Activated CD4-positive, alpha-beta T cell treated with anti-CD3 and anti-CD28 coated beads for 36 hours (primary cell): ENCODE measurements at regions of chr2 and their contacts with region 1.

Region 1: GRCh38 chr2:55050133-55050994 is at the start of gene RTN4:
- DNase-seq: peak; percentile 99
- ATAC-seq: peak; percentile 92
- H3K4me3 Mint-ChIP-seq: peak within 1 kb of the TSS; percentile 99
- H3K27ac Mint-ChIP-seq: peak within 1 kb of the TSS; percentile 100
- H3K4me1 Mint-ChIP-seq: peaks cover 60% of the 10 kb centered on the region
- H3K27me3 Mint-ChIP-seq: no peaks in the 10 kb centered on the region
- total RNA-seq, gene RTN4: 70.3 to 84.8 TPM

Region 2: DNA sequence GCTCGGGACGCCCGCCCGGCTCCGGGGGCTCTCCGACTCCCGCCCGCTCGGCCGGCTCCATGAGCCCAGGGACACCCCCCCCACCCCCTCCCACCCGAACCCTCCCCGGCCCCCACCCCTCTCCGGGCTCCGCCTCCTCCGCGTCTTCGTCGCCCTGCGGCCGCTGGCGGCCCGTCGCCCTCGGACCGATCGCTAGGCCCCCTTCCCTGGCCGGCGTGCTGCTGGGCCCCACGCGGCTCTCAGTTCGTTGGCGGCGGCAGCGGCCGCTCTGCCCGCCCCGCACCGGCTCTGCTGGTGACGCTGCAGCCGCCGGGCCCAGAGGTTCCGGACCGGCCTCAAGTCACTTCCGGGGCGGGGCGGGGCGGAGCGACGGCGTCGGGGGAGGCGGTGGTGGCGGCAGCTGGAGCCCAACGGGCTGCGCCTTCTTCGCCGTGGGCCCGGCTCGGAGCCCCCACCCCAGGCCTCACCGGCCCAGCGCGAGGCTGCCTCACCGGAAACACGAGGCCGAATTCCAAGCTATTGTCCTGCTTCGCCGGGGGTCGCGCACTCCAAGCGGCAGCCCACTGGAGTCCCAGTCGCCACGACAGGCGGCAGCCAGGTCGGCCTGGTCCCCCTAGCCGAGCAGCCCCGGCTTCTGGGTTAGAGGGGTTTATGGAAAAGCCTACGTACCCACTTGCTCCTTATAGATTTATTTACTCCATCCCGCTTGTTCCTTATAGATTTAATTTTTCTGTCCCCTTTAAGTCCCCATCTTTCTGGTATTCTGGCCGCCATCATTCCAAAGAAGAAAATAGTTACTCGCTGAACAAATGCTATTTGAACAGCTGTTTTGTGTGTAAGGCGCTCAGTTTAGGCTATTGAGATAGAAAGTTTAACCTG is 1079.4 kb before region 1 on chr2 and contains the start of gene PSME4:
- CTCF ChIA-PET with region 1: no interaction called
- POLR2A ChIA-PET with region 1: no interaction called
- intact Hi-C with region 1: loop called in 1 of 2 experiments (anchors 5 kb)
- DNase-seq: peak; percentile 96
- ATAC-seq: peak; percentile 86
- H3K4me3 Mint-ChIP-seq: peak within 1 kb of the TSS; percentile 84
- H3K27ac Mint-ChIP-seq: peak within 1 kb of the TSS; percentile 97
- H3K4me1 Mint-ChIP-seq: peaks cover 35% of the 10 kb centered on the region
- H3K27me3 Mint-ChIP-seq: no peaks in the 10 kb centered on the region
- total RNA-seq, gene PSME4: 37.8 to 44.3 TPM

Region 3: GRCh38 chr2:54723131-54723995 is 327.0 kb before region 1 on chr2 and contains the start of gene EML6:
- CTCF ChIA-PET with region 1: no interaction called
- POLR2A ChIA-PET with region 1: interaction called, 3 read pairs
- intact Hi-C with region 1: loop called (anchors 1 to 5 kb)
- DNase-seq: peak; percentile 99
- ATAC-seq: peak; percentile 99
- H3K4me3 Mint-ChIP-seq: peak within 1 kb of the TSS; percentile 80
- H3K27ac Mint-ChIP-seq: peak within 1 kb of the TSS; percentile 65
- H3K4me1 Mint-ChIP-seq: peaks cover 12% of the 10 kb centered on the region
- H3K27me3 Mint-ChIP-seq: peaks cover 44% of the 10 kb centered on the region
- total RNA-seq, gene EML6: 0.16 to 0.30 TPM

Region 4: DNA sequence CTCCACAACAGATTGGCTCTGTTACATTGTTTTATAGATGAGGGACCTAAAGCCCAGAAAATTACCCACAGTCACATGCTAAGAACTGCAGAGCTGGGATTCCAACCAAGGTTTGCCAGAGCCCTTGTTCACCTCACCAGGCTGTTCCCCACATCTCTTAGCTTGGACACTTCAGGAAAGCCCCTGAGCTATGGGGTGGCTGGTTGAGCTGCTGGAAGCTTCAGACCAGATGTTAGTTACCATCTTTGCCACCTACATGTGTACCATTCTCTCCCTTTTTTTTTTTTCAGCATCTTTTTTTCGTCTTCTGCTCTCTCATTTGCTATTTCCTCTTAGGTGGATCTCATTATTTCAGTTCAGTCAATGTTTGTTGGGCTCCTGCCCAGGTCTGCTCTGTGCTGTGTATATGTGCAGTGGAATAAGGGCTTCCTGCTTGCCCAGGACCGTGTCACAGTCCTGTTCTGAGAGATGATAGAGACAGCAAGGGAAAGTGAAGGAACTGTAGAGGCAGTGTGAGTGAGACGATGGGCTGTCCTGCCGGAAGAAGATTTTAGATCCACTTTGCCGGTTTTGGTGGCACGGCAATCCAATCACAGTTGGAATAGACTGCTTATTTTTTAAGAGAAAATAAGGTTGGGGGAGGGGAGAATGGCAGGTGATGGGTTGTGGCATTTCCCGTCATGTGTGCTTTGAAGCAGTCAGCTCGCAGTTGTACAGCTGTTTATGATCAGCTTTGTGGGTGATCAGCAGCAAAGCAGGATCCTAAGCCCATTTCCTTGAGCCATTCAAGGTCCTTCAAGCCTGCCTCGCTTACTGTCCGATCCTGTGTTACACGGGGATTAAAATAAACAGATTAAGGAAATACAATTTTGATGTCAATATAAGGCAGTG is 152.7 kb before region 1 on chr2:
- CTCF ChIA-PET with region 1: no interaction called
- POLR2A ChIA-PET with region 1: no interaction called
- intact Hi-C with region 1: no loop called
- DNase-seq: peak; percentile 52
- ATAC-seq: peak; percentile 86
- H3K4me3 Mint-ChIP-seq: peak overlapping the region; percentile 7
- H3K27ac Mint-ChIP-seq: peak overlapping the region; percentile 81
- H3K4me1 Mint-ChIP-seq: peaks cover 15% of the 10 kb centered on the region
- H3K27me3 Mint-ChIP-seq: no peaks in the 10 kb centered on the region

Region 5: GRCh38 chr2:55026202-55026601 is 24.2 kb before region 1 on chr2:
- CTCF ChIA-PET with region 1: interaction called, 43 read pairs
- POLR2A ChIA-PET with region 1: interaction called, 11 read pairs
- intact Hi-C with region 1: no loop called
- DNase-seq: no peak
- ATAC-seq: peak; percentile 19
- H3K4me3 Mint-ChIP-seq: no peak overlapping the region
- H3K27ac Mint-ChIP-seq: peak overlapping the region; percentile 26
- H3K4me1 Mint-ChIP-seq: peaks cover 10% of the 10 kb centered on the region
- H3K27me3 Mint-ChIP-seq: no peaks in the 10 kb centered on the region

Region 6: DNA sequence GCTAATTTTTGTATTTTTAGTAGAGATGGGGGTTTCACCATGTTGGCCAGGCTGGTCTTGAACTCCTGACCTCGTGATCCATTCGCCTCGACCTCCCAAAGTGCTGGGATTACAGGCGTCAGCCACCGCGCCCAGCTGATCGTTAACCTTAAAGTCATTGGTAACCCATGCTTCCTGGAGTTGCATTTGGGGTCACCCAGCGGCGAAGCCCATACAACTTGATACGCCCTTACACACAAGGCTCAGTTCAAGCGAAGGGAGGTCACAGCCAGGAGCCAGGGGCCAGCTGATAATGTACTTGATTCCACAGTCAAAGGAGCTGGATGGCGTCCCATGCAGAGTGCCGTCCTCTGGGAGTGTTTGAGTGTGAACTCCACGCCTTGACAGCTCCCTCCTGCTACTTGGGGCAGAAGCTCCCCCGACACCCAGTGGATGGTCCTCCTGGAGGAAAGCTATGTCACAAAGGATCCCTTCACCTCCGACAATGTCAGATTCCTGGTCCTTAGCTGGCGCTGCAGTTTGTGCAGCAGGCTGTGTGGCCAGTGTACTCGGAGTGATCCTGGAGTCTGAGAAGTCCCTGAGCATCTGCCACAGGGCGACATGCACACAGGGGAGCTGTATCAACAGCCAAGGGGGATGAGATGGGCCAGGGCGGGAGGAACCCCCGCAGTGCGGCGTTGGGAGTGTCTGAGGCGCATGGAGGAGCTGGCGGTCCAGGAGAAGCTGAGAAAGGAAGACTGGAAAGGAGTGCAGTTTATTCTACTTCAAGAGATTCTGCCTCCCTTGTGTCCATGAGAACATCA is 173.8 kb after region 1 on chr2:
- CTCF ChIA-PET with region 1: no interaction called
- POLR2A ChIA-PET with region 1: interaction called, 5 read pairs
- intact Hi-C with region 1: loop called (anchors 2 kb)
- DNase-seq: no peak
- ATAC-seq: no peak
- H3K4me3 Mint-ChIP-seq: peak overlapping the region; percentile 66
- H3K27ac Mint-ChIP-seq: peak overlapping the region; percentile 76
- H3K4me1 Mint-ChIP-seq: peaks cover 38% of the 10 kb centered on the region
- H3K27me3 Mint-ChIP-seq: no peaks in the 10 kb centered on the region

Region 7: GRCh38 chr2:55282110-55282917 is 231.9 kb after region 1 on chr2:
- CTCF ChIA-PET with region 1: no interaction called
- POLR2A ChIA-PET with region 1: no interaction called
- intact Hi-C with region 1: loop called in 1 of 2 experiments (anchors 5 kb)
- DNase-seq: peak; percentile 91
- ATAC-seq: peak; percentile 99
- H3K4me3 Mint-ChIP-seq: peak overlapping the region; percentile 86
- H3K27ac Mint-ChIP-seq: peak overlapping the region; percentile 94
- H3K4me1 Mint-ChIP-seq: peaks cover 14% of the 10 kb centered on the region
- H3K27me3 Mint-ChIP-seq: no peaks in the 10 kb centered on the region

Region 8: DNA sequence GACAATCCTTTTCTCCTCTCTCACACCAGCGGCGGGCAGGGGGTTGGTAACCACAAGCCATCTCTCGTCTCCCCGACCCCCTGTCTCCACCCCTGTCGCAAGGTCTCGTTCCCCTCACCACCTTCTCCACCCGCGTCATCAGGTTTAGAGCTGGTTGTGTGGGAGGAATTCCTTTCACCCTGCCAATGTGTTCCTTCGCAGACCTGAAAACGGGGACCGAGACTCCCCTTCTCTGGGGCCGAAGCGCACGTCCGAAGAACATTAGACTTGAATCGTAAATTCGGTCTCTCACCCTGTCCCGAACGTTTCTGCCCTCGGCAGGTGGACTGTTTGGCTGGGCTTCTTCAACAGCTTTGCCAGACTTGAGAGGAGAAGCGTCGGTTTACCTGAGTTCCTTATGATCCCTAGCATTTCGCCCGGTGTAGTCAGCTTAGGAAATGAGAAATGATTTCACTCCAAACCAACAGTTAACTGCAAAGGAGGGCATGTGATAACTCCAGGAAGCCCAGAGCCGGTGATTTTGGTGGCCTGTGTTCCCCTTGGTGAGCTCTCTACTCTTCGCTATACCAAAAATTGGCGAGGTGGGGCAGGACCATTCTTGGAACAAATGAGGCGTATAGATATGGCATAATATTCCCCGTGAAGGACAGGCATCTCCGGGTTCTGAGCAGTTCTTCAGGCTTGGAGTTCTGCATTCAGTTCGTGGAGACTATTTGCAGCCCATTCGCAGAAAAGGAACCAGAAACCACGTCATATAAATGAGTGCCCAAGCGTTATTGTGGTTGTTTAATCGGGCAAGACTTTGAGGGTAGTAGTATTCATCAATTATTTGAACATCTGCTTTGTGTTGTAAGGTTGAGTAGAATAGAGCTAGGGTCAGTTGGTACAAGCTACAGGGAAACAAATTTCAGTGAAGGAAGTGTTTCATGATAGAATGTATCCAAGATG is 469.8 kb after region 1 on chr2:
- CTCF ChIA-PET with region 1: no interaction called
- POLR2A ChIA-PET with region 1: no interaction called
- intact Hi-C with region 1: loop called (anchors 1 kb)
- DNase-seq: peak; percentile 52
- ATAC-seq: peak; percentile 25
- H3K4me3 Mint-ChIP-seq: peak overlapping the region; percentile 99
- H3K27ac Mint-ChIP-seq: peak overlapping the region; percentile 90
- H3K4me1 Mint-ChIP-seq: peaks cover 8% of the 10 kb centered on the region
- H3K27me3 Mint-ChIP-seq: no peaks in the 10 kb centered on the region